ENCODE measurements at regions of chr7 and their contacts with region 1.

Region 1: GRCh38 chr7:1175967-1176851 is 16.2 kb upstream of the ZFAND2A start:
- DNase-seq: peak; percentile 80
- ATAC-seq: peak; percentile 73
- H3K4me3 ChIP-seq: peak overlapping the region in 3 of 5 experiments; percentile 11 to 24 (median 15)
- H3K4me3 Mint-ChIP-seq: peak overlapping the region; percentile 57
- H3K27ac ChIP-seq: no peak overlapping the region
- H3K27ac Mint-ChIP-seq: no peak overlapping the region
- H3K4me1 ChIP-seq: peaks cover 8 to 11% of the 10 kb centered on the region in 2 donors
- H3K4me1 Mint-ChIP-seq: peaks cover 10% of the 10 kb centered on the region
- H3K27me3 ChIP-seq: peaks cover 0 to 14% (median 5%) of the 10 kb centered on the region in 4 experiments
- H3K27me3 Mint-ChIP-seq: peaks cover 17% of the 10 kb centered on the region
- CTCF ChIP-seq: peak; percentile 86

Region 2: GRCh38 chr7:786472-787255 is 389.5 kb before region 1 on chr7:
- CTCF ChIA-PET with region 1: no interaction called
- POLR2A ChIA-PET with region 1: no interaction called
- intact Hi-C with region 1: loop called (anchors 2 kb)
- DNase-seq: peak; percentile 70
- ATAC-seq: peak; percentile 85
- H3K4me3 ChIP-seq: no peak overlapping the region
- H3K4me3 Mint-ChIP-seq: no peak overlapping the region
- H3K27ac ChIP-seq: no peak overlapping the region
- H3K27ac Mint-ChIP-seq: no peak overlapping the region
- H3K4me1 ChIP-seq: no peaks in the 10 kb centered on the region
- H3K4me1 Mint-ChIP-seq: no peaks in the 10 kb centered on the region
- H3K27me3 ChIP-seq: no peaks in the 10 kb centered on the region
- H3K27me3 Mint-ChIP-seq: no peaks in the 10 kb centered on the region
- CTCF ChIP-seq: peak; percentile 76

Region 3: GRCh38 chr7:909358-910329 is 266.6 kb before region 1 on chr7:
- CTCF ChIA-PET with region 1: interaction called, 47 read pairs
- POLR2A ChIA-PET with region 1: no interaction called
- intact Hi-C with region 1: loop called (anchors 1 kb)
- DNase-seq: peak; percentile 85
- ATAC-seq: peak; percentile 40
- H3K4me3 ChIP-seq: peak overlapping the region in 4 of 5 experiments; percentile 29 to 61 (median 51)
- H3K4me3 Mint-ChIP-seq: peak overlapping the region; percentile 85
- H3K27ac ChIP-seq: peak overlapping the region; percentile 1 to 33
- H3K27ac Mint-ChIP-seq: peak overlapping the region; percentile 68
- H3K4me1 ChIP-seq: peaks cover 16 to 20% of the 10 kb centered on the region in 2 donors
- H3K4me1 Mint-ChIP-seq: peaks cover 18% of the 10 kb centered on the region
- H3K27me3 ChIP-seq: no peaks in the 10 kb centered on the region
- H3K27me3 Mint-ChIP-seq: no peaks in the 10 kb centered on the region
- CTCF ChIP-seq: no peak

Region 4: DNA sequence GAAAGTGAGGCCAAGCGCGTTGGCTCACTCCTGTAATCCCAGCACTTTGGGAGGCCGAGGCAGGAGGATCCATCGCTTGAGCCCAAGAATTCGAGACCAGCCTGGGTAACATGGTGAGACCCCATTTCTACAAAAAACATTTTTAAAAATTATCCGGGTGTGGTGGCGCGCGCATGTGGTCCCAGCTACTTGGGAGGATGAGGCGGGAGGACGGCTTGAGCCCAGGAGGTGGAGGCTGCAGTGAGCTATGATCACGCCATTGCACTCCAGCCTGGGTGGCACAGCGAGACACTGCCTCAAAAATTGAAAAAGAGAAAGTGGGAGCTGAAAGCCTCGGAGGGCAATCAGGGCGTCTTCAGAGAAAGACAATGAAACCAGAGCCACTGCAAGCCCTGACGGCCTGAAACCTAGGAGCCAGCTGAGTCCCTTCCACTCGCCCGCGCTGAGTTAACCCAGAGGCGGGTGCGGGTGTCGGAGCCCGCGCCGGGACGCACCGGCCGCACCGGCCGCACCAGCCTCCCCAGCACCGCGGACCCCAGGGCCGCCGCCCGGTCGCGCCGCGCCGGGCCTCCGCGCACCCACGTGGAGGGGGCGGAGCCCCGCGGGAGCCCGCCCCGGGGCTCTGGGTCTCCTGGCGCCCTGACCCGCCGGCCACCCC is 38.6 kb before region 1 on chr7:
- CTCF ChIA-PET with region 1: interaction called, 20 read pairs
- POLR2A ChIA-PET with region 1: no interaction called
- intact Hi-C with region 1: no loop called
- DNase-seq: no peak
- ATAC-seq: peak; percentile 64
- H3K4me3 ChIP-seq: peak overlapping the region; percentile 21 to 96 (median 75)
- H3K4me3 Mint-ChIP-seq: peak overlapping the region; percentile 89
- H3K27ac ChIP-seq: peak overlapping the region; percentile 73 to 91
- H3K27ac Mint-ChIP-seq: peak overlapping the region; percentile 92
- H3K4me1 ChIP-seq: peaks cover 28 to 37% of the 10 kb centered on the region in 2 donors
- H3K4me1 Mint-ChIP-seq: peaks cover 43% of the 10 kb centered on the region
- H3K27me3 ChIP-seq: no peaks in the 10 kb centered on the region
- H3K27me3 Mint-ChIP-seq: no peaks in the 10 kb centered on the region
- CTCF ChIP-seq: no peak

Region 5: GRCh38 chr7:1151653-1152425 is 24.4 kb before region 1 on chr7:
- CTCF ChIA-PET with region 1: interaction called, 11 read pairs
- POLR2A ChIA-PET with region 1: no interaction called
- intact Hi-C with region 1: no loop called
- DNase-seq: peak; percentile 67
- ATAC-seq: peak; percentile 91
- H3K4me3 ChIP-seq: no peak overlapping the region
- H3K4me3 Mint-ChIP-seq: no peak overlapping the region
- H3K27ac ChIP-seq: peak overlapping the region in 1 of 2 donors; percentile 47
- H3K27ac Mint-ChIP-seq: peak overlapping the region; percentile 85
- H3K4me1 ChIP-seq: peaks cover 0 to 12% of the 10 kb centered on the region in 2 donors
- H3K4me1 Mint-ChIP-seq: peaks cover 6% of the 10 kb centered on the region
- H3K27me3 ChIP-seq: no peaks in the 10 kb centered on the region
- H3K27me3 Mint-ChIP-seq: no peaks in the 10 kb centered on the region
- CTCF ChIP-seq: no peak

Region 6: DNA sequence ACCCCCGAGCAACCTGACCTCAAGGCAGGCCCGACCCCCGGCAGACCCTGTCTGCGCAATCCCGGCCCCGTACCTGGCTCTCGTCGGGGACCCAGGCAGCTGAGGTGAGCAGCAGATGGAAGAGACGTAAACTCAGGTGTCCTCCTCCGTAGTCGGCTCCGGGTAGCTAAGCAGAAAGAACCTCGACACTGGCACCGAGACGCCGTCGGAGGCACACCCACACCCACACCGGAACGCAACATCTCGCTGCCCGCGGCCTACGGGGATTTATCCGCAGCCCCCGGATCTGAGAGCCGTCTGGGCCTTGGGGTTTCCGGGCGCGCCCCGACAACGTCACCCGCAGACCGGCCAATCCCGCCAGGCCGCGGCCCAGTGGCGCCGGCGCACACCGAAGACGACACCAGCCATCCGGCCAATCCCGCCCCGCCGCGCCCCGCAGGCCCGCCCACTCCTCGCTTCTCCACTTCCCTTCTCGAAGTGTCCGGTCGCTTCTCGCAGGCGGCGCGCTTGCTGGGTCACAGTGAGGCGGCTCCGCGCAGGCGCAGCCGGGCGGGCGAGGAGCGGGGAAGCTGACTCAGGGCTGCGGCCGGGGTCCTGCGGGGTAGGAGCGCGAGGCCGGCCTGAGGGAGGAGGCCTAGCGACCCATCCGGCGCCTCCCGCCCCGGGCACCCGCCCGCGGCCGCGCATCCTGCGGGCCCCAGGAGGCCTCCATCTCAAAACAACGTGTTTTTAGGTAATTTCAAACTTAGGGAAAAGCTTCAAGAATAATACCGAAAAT is 16.1 kb before region 1 on chr7 and contains the start of gene ZFAND2A:
- CTCF ChIA-PET with region 1: interaction called, 11 read pairs
- POLR2A ChIA-PET with region 1: no interaction called
- intact Hi-C with region 1: no loop called
- DNase-seq: peak; percentile 98
- ATAC-seq: peak; percentile 97
- H3K4me3 ChIP-seq: peak within 1 kb of the TSS; percentile 79 to 99 (median 94)
- H3K4me3 Mint-ChIP-seq: peak within 1 kb of the TSS; percentile 87
- H3K27ac ChIP-seq: peak within 1 kb of the TSS; percentile 89 to 90
- H3K27ac Mint-ChIP-seq: peak within 1 kb of the TSS; percentile 90
- H3K4me1 ChIP-seq: peaks cover 16 to 22% of the 10 kb centered on the region in 2 donors
- H3K4me1 Mint-ChIP-seq: peaks cover 24% of the 10 kb centered on the region
- H3K27me3 ChIP-seq: no peaks in the 10 kb centered on the region
- H3K27me3 Mint-ChIP-seq: no peaks in the 10 kb centered on the region
- CTCF ChIP-seq: no peak
- total RNA-seq, gene ZFAND2A: 26.7 and 27.3 TPM in 2 replicates

Measured in B cell (primary cell).